HepG2 (cell line): ENCODE measurements at regions of chr9 and their contacts with region 1.

Region 1: DNA sequence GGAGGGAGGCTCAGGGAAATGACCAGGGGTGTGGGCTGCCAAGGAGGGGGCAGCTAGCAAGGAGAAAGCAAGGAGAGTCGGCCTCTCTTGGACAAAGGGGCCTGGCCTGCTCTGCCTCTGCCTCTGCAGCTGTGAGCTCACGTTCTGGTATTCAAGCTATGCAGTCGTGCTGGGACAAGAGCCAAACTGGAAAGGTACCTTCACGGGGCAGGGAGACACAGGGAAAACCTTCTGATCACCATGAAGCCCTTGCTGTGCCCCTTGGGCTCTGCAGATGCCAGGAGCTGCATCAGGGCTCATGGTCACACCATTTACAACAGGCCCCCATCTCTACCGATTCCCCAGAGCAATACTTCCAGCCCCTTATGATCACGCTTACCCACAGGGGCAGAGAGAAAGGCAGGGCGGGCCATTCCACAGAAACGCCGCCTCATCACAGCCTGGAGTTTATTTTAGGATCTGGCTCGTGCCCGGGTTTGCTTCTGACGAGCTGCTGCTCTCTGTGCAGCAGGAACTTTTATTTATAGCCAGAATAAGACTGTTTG is 63.2 kb downstream of the PRRT1B start:
- DNase-seq: peak; percentile 75
- ATAC-seq: peak; percentile 58
- H3K4me3 ChIP-seq: no peak overlapping the region
- H3K27ac ChIP-seq: peak overlapping the region; percentile 23
- H3K4me1 ChIP-seq: peaks cover 60% of the 10 kb centered on the region
- H3K27me3 ChIP-seq: no peaks in the 10 kb centered on the region
- CTCF ChIP-seq: no peak
- EP300 ChIP-seq: no peak
- POLR2A ChIP-seq: no peak
- RAD21 ChIP-seq: no peak

Region 2: GRCh38 chr9:131320031-131320685 is 288.4 kb before region 1 on chr9:
- CTCF ChIA-PET with region 1: no interaction called
- POLR2A ChIA-PET with region 1: no interaction called
- in situ Hi-C with region 1: no loop called
- intact Hi-C with region 1: no loop called
- DNase-seq: no peak
- ATAC-seq: no peak
- H3K4me3 ChIP-seq: no peak overlapping the region
- H3K27ac ChIP-seq: no peak overlapping the region
- H3K4me1 ChIP-seq: peaks cover 49% of the 10 kb centered on the region
- H3K27me3 ChIP-seq: peaks cover 0 to 13% of the 10 kb centered on the region in 2 experiments; a peak in 3 of 5 replicates
- CTCF ChIP-seq: no peak
- EP300 ChIP-seq: no peak
- POLR2A ChIP-seq: no peak
- RAD21 ChIP-seq: no peak

Region 3: GRCh38 chr9:131656356-131657036 is 47.9 kb after region 1 on chr9:
- CTCF ChIA-PET with region 1: no interaction called
- POLR2A ChIA-PET with region 1: no interaction called
- in situ Hi-C with region 1: no loop called
- intact Hi-C with region 1: loop called (anchors 5 kb)
- DNase-seq: no peak
- ATAC-seq: no peak
- H3K4me3 ChIP-seq: no peak overlapping the region
- H3K27ac ChIP-seq: no peak overlapping the region
- H3K4me1 ChIP-seq: peaks cover 51% of the 10 kb centered on the region
- H3K27me3 ChIP-seq: no peaks in the 10 kb centered on the region
- CTCF ChIP-seq: no peak
- EP300 ChIP-seq: no peak
- POLR2A ChIP-seq: no peak
- RAD21 ChIP-seq: no peak

Region 4: DNA sequence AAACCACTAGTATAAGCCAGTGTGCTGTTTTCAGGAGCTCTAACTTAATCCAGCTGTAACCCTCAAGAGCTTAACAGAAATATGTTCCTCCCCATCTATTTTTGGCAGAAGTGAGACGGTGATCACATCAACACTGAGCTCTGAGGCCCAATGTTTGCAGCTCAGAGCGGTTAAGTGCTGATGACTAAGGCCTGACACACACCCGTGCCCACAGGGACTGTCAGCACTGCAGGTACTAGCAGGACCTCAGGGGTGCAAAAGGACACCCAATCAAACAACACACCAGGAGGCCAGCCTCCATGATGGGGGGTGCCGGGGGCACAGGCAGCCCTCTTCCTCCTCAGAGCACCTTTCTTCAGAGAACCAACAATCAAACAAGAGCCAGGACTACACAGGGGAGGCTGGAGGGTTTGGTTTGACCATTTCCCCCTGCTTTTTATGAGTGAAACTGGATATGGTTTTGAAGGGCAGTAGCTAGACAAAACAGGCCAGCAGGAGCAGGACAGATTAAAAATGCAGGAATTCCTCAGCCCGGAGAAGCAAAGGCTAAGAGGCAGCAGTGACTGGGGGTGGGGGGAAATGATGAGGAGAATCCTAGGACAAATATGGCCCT is 70.0 kb after region 1 on chr9:
- CTCF ChIA-PET with region 1: no interaction called
- POLR2A ChIA-PET with region 1: interaction called, 12 read pairs
- in situ Hi-C with region 1: no loop called
- intact Hi-C with region 1: no loop called
- DNase-seq: peak; percentile 56
- ATAC-seq: peak; percentile 89
- H3K4me3 ChIP-seq: no peak overlapping the region
- H3K27ac ChIP-seq: no peak overlapping the region
- H3K4me1 ChIP-seq: peaks cover 61% of the 10 kb centered on the region
- H3K27me3 ChIP-seq: no peaks in the 10 kb centered on the region
- CTCF ChIP-seq: no peak
- EP300 ChIP-seq: no peak
- POLR2A ChIP-seq: no peak
- RAD21 ChIP-seq: no peak

Region 5: DNA sequence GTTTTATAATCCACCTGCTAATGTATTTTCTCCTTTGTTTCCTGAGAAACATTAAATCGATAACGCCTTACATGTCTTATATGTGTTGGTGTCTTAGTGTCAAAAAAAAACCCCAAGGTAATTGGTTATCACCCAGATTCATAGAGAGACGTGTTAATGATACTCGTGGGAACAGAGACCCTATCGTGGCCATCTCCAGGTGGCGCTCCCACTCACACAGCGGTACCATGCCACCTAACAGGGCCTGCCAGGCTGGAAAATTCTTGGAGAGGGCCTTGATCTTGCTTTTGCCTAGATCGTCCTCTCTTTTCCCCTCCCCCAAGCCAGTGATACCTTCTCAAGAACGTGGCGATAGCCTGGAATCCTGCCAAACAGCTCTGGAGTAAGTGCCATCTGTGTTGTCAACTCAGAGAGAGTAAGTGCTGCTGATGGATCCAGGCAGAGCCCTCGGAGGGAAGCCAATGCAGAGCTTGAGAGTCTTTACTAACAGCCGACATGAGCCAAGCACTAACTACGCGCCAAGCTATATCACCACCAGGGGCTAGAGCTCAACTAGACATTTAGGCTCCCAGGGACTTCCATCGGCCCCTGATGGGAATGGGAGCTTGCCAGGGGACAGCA is 113.6 kb after region 1 on chr9:
- CTCF ChIA-PET with region 1: no interaction called
- POLR2A ChIA-PET with region 1: no interaction called
- in situ Hi-C with region 1: no loop called
- intact Hi-C with region 1: no loop called
- DNase-seq: no peak
- ATAC-seq: no peak
- H3K4me3 ChIP-seq: no peak overlapping the region
- H3K27ac ChIP-seq: no peak overlapping the region
- H3K4me1 ChIP-seq: peaks cover 34% of the 10 kb centered on the region
- H3K27me3 ChIP-seq: no peaks in the 10 kb centered on the region
- CTCF ChIP-seq: no peak
- EP300 ChIP-seq: no peak
- POLR2A ChIP-seq: no peak
- RAD21 ChIP-seq: no peak

Region 6: GRCh38 chr9:131733541-131734061 is 125.0 kb after region 1 on chr9:
- CTCF ChIA-PET with region 1: no interaction called
- POLR2A ChIA-PET with region 1: interaction called, 12 read pairs
- in situ Hi-C with region 1: no loop called
- intact Hi-C with region 1: loop called (anchors 2 kb)
- DNase-seq: no peak
- ATAC-seq: no peak
- H3K4me3 ChIP-seq: no peak overlapping the region
- H3K27ac ChIP-seq: peak overlapping the region; percentile 60
- H3K4me1 ChIP-seq: peaks cover 99% of the 10 kb centered on the region
- H3K27me3 ChIP-seq: no peaks in the 10 kb centered on the region
- CTCF ChIP-seq: no peak
- EP300 ChIP-seq: no peak
- POLR2A ChIP-seq: no peak
- RAD21 ChIP-seq: no peak

Region 7: DNA sequence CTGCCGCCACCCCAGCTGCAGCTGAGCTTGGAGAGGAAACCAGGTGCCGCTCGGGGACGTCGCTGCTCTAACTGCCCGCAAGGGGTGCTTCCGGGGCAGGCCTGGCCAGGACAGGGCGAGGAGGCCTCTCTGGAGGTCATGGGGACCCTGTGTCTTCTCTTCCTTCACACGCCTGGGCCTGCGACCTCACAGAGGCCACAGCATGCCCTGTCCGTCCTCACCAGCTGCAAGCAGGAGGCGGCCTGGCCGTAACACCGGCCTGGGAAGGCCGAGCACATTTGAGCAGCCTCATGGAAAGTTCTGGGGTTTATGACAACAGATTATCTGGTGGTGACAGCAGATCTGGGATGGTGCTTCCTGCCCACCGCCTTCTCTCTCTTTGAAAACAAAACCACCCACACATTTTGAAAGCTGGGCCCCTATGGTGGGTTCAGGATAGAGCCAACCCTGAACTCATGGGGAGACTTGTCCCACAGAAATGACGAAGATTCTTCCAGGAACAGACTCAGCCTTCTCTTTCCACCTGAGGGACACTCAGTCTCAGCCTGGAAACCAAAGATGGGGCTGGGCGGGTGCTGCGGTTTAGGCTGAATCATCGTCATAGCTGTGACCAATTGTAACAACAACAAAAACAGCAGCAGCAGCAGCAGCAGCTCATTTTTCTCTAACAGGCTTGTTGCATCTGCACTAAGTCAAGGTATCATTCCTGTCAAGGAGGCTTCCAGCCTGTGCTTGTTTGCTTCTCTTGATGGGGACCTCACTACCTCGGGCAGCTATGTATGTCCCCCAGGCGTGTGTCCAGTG is 230.9 kb after region 1 on chr9:
- CTCF ChIA-PET with region 1: no interaction called
- POLR2A ChIA-PET with region 1: no interaction called
- in situ Hi-C with region 1: no loop called
- intact Hi-C with region 1: no loop called
- DNase-seq: no peak
- ATAC-seq: no peak
- H3K4me3 ChIP-seq: no peak overlapping the region
- H3K27ac ChIP-seq: no peak overlapping the region
- H3K4me1 ChIP-seq: peaks cover 6% of the 10 kb centered on the region; the same call in 1 of the 2 replicates
- H3K27me3 ChIP-seq: peaks cover 7 to 75% of the 10 kb centered on the region in 2 experiments
- CTCF ChIP-seq: no peak
- EP300 ChIP-seq: no peak
- POLR2A ChIP-seq: no peak
- RAD21 ChIP-seq: no peak